ENCODE measurements at regions of chr5 and their contacts with region 1.

Region 1: GRCh38 chr5:92222449-92222848 is 839.3 kb upstream of the ARRDC3 start:
- DNase-seq: peak; percentile 30
- ATAC-seq: peak; percentile 53
- H3K4me3 ChIP-seq: no peak overlapping the region
- H3K27ac ChIP-seq: no peak overlapping the region
- H3K4me1 ChIP-seq: no peaks in the 10 kb centered on the region
- H3K27me3 ChIP-seq: no peaks in the 10 kb centered on the region
- CTCF ChIP-seq: peak; percentile 54

Region 2: GRCh38 chr5:91864962-91865361 is 357.5 kb before region 1 on chr5:
- CTCF ChIA-PET with region 1: no interaction called
- POLR2A ChIA-PET with region 1: no interaction called
- intact Hi-C with region 1: loop called (anchors 5 kb)
- DNase-seq: peak; percentile 11
- ATAC-seq: peak; percentile 35
- H3K4me3 ChIP-seq: no peak overlapping the region
- H3K27ac ChIP-seq: no peak overlapping the region
- H3K4me1 ChIP-seq: no peaks in the 10 kb centered on the region
- H3K27me3 ChIP-seq: no peaks in the 10 kb centered on the region
- CTCF ChIP-seq: peak; percentile 38; the same call in 1 of the 2 replicates

Region 3: GRCh38 chr5:91928754-91929521 is 293.5 kb before region 1 on chr5:
- CTCF ChIA-PET with region 1: no interaction called
- POLR2A ChIA-PET with region 1: no interaction called
- intact Hi-C with region 1: loop called (anchors 1 kb)
- DNase-seq: peak; percentile 67
- ATAC-seq: peak; percentile 72
- H3K4me3 ChIP-seq: no peak overlapping the region
- H3K27ac ChIP-seq: no peak overlapping the region
- H3K4me1 ChIP-seq: no peaks in the 10 kb centered on the region
- H3K27me3 ChIP-seq: peaks cover 4% of the 10 kb centered on the region; the same call in 1 of the 2 replicates
- CTCF ChIP-seq: peak; percentile 86

Measured in PC-3 (cell line).